CD8-positive, alpha-beta T cell (primary cell): ENCODE measurements at regions of chr1 and their contacts with region 1.

Region 1: GRCh38 chr1:11272832-11273594 is at the start of gene UBIAD1:
- DNase-seq: peak; percentile 66 to 92 (median 84)
- ATAC-seq: peak; percentile 78
- H3K4me3 ChIP-seq: peak within 1 kb of the TSS; percentile 69 to 100
- H3K4me3 Mint-ChIP-seq: peak within 1 kb of the TSS; percentile 89
- H3K27ac ChIP-seq: peak within 1 kb of the TSS; percentile 74 to 95
- H3K27ac Mint-ChIP-seq: peak within 1 kb of the TSS; percentile 94
- H3K4me1 ChIP-seq: peaks cover 30% of the 10 kb centered on the region
- H3K4me1 Mint-ChIP-seq: peaks cover 34% of the 10 kb centered on the region
- H3K27me3 ChIP-seq: no peaks in the 10 kb centered on the region
- H3K27me3 Mint-ChIP-seq: no peaks in the 10 kb centered on the region
- CTCF ChIP-seq: no peak
- total RNA-seq, gene UBIAD1: 15.9 to 18.2 TPM

Region 2: GRCh38 chr1:11012250-11013171 is 260.5 kb before region 1 on chr1 and contains the start of gene TARDBP:
- CTCF ChIA-PET with region 1: no interaction called
- POLR2A ChIA-PET with region 1: interaction called, 3 read pairs
- intact Hi-C with region 1: loop called in 1 of 2 experiments (anchors 2 kb)
- DNase-seq: peak; percentile 82 to 95 (median 90)
- ATAC-seq: peak; percentile 87
- H3K4me3 ChIP-seq: peak within 1 kb of the TSS; percentile 78 to 94
- H3K4me3 Mint-ChIP-seq: peak within 1 kb of the TSS; percentile 92
- H3K27ac ChIP-seq: peak within 1 kb of the TSS; percentile 95 to 97
- H3K27ac Mint-ChIP-seq: peak within 1 kb of the TSS; percentile 97
- H3K4me1 ChIP-seq: peaks cover 38% of the 10 kb centered on the region
- H3K4me1 Mint-ChIP-seq: peaks cover 36% of the 10 kb centered on the region
- H3K27me3 ChIP-seq: no peaks in the 10 kb centered on the region
- H3K27me3 Mint-ChIP-seq: no peaks in the 10 kb centered on the region
- CTCF ChIP-seq: no peak
- total RNA-seq, gene TARDBP: 125 to 131 TPM

Region 3: DNA sequence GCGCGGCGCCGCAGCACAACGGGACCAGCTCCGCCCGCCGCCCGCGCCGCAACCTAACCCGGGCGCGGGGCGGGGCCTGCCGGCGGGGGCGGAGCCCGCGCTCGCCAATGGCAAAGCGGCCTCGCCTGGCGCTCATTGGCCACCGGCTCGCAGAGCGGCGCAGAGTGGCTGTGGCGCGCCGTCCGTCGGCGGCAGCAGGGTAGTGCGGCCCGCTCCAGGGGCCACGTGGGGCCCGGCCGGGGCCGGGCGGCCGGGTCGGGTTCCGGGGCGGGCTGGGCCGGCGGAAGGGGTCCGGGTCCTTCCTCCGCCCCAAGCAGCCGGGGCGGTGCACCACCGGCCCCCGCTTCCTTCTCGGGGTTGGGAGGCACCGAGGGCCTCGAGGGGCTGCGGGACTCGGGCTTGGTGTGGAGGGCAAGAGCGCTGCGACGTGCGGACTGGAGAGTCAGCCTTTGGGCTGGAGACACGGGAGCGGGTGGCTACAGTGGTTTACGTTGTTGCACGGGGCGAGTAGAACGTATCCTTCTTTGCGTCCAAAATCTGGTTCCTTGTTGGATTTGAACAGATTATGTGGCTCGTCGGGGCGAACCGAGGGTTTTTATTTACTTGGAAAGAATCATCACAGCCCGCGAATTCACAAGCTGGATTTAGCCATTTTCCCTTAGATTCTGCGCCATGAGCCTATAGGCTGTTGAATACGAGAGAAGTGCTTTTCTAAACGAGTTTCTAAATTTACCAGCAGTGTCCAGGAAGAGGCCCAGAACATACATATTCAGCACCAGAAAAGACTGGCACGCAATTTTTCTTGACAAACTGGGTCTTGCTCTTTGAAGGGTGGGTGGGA is 212.8 kb before region 1 on chr1 and contains the start of gene SRM:
- CTCF ChIA-PET with region 1: no interaction called
- POLR2A ChIA-PET with region 1: interaction called, 4 read pairs
- intact Hi-C with region 1: loop called (anchors 1 to 5 kb)
- DNase-seq: peak; percentile 80 to 95 (median 89)
- ATAC-seq: peak; percentile 94
- H3K4me3 ChIP-seq: peak within 1 kb of the TSS; percentile 77 to 84
- H3K4me3 Mint-ChIP-seq: peak within 1 kb of the TSS; percentile 91
- H3K27ac ChIP-seq: peak within 1 kb of the TSS; percentile 69 to 82
- H3K27ac Mint-ChIP-seq: peak within 1 kb of the TSS; percentile 92
- H3K4me1 ChIP-seq: peaks cover 22% of the 10 kb centered on the region
- H3K4me1 Mint-ChIP-seq: peaks cover 32% of the 10 kb centered on the region
- H3K27me3 ChIP-seq: no peaks in the 10 kb centered on the region
- H3K27me3 Mint-ChIP-seq: no peaks in the 10 kb centered on the region
- CTCF ChIP-seq: peak; percentile 49
- total RNA-seq, gene SRM: 31.4 to 40.6 TPM

Region 4: GRCh38 chr1:11248155-11248554 is 24.9 kb before region 1 on chr1:
- CTCF ChIA-PET with region 1: interaction called, 10 read pairs
- POLR2A ChIA-PET with region 1: interaction called, 4 read pairs
- intact Hi-C with region 1: no loop called
- DNase-seq: no peak
- ATAC-seq: no peak
- H3K4me3 ChIP-seq: no peak overlapping the region
- H3K4me3 Mint-ChIP-seq: no peak overlapping the region
- H3K27ac ChIP-seq: no peak overlapping the region
- H3K27ac Mint-ChIP-seq: peak overlapping the region; percentile 45
- H3K4me1 ChIP-seq: no peaks in the 10 kb centered on the region
- H3K4me1 Mint-ChIP-seq: peaks cover 12% of the 10 kb centered on the region
- H3K27me3 ChIP-seq: no peaks in the 10 kb centered on the region
- H3K27me3 Mint-ChIP-seq: no peaks in the 10 kb centered on the region
- CTCF ChIP-seq: no peak

Region 5: GRCh38 chr1:11681071-11681771 is 408.2 kb after region 1 on chr1 and contains the start of gene MAD2L2:
- CTCF ChIA-PET with region 1: no interaction called
- POLR2A ChIA-PET with region 1: no interaction called
- intact Hi-C with region 1: loop called (anchors 1 kb)
- DNase-seq: peak; percentile 75 to 93 (median 91)
- ATAC-seq: peak; percentile 91
- H3K4me3 ChIP-seq: peak within 1 kb of the TSS; percentile 91 to 95
- H3K4me3 Mint-ChIP-seq: peak within 1 kb of the TSS; percentile 89
- H3K27ac ChIP-seq: peak within 1 kb of the TSS; percentile 54 to 69
- H3K27ac Mint-ChIP-seq: peak within 1 kb of the TSS; percentile 91
- H3K4me1 ChIP-seq: peaks cover 14% of the 10 kb centered on the region
- H3K4me1 Mint-ChIP-seq: peaks cover 18% of the 10 kb centered on the region
- H3K27me3 ChIP-seq: peaks cover 0 to 2% of the 10 kb centered on the region in 2 experiments
- H3K27me3 Mint-ChIP-seq: peaks cover 4% of the 10 kb centered on the region
- CTCF ChIP-seq: no peak
- total RNA-seq, gene MAD2L2: 28.7 to 29.4 TPM

Region 6: DNA sequence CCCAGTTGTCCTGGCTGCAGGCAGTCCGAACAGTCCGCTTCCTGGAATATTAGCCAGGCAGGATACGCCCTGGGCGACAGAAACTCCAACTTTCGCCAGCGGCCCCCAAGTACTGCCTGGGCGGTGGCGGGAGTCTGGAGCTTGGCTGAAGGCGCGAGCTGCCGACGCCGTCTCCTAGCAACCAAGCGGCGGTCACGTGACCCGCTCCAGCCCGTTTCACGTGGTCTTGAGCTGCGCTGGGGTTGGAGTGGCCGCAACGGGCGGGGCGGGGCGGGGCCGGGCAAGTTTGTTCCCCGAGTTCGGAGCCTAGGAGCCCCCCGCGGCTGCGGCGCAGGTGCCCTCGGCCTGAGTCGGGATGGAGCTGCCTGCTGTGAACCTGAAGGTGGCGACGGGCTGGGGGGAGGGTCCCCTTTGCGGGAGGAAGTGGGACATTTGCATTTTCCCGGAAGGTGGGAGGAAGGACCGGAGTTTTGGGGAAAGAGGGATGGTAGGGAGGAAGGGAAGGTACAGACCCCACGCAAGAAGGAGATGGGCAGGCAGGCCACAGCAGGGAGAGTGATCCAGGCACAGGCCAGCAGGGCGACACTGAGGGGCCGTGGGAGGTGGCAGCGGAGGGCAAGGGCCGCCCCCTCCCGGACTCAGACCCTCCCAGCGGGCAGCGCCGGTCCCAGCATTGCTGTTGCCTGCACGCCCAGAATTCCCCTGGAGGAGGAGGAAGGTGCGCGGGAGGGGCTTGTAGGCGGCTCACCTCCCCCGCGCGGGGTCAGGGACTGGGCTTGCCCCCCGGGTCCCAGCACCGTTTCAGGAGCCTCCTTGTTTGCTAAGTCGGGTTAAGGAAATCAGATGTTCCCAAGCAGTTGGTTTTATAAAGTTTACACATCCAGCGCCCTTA is 463.1 kb after region 1 on chr1 and contains the start of gene AGTRAP:
- CTCF ChIA-PET with region 1: no interaction called
- POLR2A ChIA-PET with region 1: no interaction called
- intact Hi-C with region 1: loop called in 1 of 2 experiments (anchors 5 kb)
- DNase-seq: peak; percentile 74 to 94 (median 86)
- ATAC-seq: peak; percentile 65
- H3K4me3 ChIP-seq: peak within 1 kb of the TSS; percentile 87 to 90
- H3K4me3 Mint-ChIP-seq: peak within 1 kb of the TSS; percentile 91
- H3K27ac ChIP-seq: peak within 1 kb of the TSS; percentile 50 to 74
- H3K27ac Mint-ChIP-seq: peak within 1 kb of the TSS; percentile 65
- H3K4me1 ChIP-seq: peaks cover 50% of the 10 kb centered on the region
- H3K4me1 Mint-ChIP-seq: peaks cover 69% of the 10 kb centered on the region
- H3K27me3 ChIP-seq: no peaks in the 10 kb centered on the region
- H3K27me3 Mint-ChIP-seq: no peaks in the 10 kb centered on the region
- CTCF ChIP-seq: no peak
- total RNA-seq, gene AGTRAP: 10.4 to 10.9 TPM